PC-9 (cell line): ENCODE measurements at regions of chr16 and their contacts with region 1.

Region 1: DNA sequence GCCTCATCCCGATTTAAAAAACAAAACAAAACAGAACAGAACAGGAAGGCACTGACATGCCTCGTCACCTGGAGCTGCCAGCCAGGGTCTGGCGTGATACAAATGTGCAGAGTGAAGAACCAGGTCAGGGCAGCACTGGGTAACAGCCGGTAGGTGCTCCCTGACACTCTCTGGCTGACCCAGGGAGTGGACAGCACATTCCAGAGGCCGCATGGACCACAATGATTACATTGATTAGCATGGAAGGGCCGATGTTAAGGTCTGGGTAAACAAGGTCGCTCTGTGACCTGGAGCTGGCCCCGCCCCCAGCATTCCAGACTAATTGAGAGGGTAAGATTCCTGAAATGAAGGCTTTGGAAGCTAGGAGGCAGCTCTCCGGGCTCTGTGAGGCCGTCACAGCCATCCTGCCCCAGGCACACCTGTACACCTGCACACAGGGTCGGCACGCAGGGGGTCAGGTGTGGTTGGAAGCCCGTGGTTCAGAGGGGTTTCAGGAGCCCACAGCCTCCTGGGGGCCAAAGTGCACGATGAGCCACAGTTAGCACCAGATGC is 21.4 kb downstream of the PIEZO1 start:
- DNase-seq: peak; percentile 95 to 96
- H3K4me3 ChIP-seq: peak overlapping the region; percentile 49; the same call in 1 of the 2 replicates
- H3K27ac ChIP-seq: peak overlapping the region; percentile 63
- H3K4me1 ChIP-seq: peaks cover 98% of the 10 kb centered on the region
- H3K27me3 ChIP-seq: no peaks in the 10 kb centered on the region
- CTCF ChIP-seq: no peak; the same call in 1 of the 2 replicates

Region 2: DNA sequence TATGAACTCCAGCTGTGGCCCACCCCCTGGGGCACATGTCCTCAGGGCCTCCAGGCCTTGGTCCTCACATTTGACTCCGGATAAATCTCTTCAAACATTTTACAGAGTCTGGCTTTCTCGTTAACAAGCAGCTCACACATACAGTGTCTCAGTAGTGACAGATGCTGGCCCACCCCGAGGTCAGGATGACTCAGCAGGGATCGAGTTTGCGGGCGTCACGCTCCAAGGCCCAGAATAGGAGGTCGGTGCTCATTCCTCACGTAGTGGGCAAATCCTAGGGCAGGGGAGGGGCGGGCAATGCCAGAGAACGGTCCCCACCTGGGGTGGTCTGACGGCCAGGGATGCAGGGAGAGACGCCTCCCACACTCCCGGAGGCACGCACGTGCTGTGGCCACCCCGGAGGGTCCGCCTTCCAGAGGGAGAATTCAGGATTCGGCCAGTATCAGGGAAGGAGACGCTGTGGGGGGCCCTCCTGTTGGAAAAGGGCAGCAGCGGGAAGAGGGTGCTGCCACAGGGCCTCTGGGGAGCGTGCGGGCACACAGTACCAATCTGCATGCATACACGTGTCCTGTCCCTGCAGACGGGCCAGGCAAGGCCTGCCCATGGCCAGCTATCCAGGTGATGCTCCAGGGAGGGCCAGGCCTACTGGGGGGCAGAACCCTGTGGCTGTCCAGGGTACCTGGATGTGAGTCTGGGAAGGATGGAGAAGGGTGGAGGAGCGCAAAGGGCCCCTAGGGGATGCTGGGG is 902.9 kb before region 1 on chr16:
- CTCF ChIA-PET with region 1: no interaction called
- POLR2A ChIA-PET with region 1: no interaction called
- intact Hi-C with region 1: loop called (anchors 5 kb)
- DNase-seq: peak; percentile 52 to 80
- H3K4me3 ChIP-seq: no peak overlapping the region
- H3K27ac ChIP-seq: no peak overlapping the region
- H3K4me1 ChIP-seq: peaks cover 47% of the 10 kb centered on the region
- H3K27me3 ChIP-seq: no peaks in the 10 kb centered on the region
- CTCF ChIP-seq: no peak

Region 3: DNA sequence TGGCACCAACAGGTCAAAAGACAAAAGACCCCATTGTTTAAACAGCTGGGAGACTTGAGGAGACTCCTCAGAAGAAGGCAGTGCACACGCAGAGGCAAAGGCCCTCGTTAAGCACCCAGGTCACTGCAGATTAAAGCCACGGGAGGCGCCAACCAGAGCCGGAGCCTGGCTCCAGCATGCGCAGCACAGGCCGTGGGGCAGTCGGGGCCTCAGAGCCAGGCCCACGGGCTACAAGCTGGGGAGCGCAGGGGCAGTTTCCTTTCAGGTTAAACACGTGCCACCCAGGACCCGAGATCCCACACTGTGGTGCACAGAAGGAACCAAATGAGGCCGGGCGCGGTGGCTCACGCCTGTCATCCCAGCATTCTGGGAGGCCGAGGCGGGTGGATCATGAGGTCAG is 12.2 kb after region 1 on chr16:
- CTCF ChIA-PET with region 1: interaction called, 9 read pairs
- POLR2A ChIA-PET with region 1: interaction called, 37 read pairs
- intact Hi-C with region 1: loop called (anchors 1 kb)
- DNase-seq: no peak
- H3K4me3 ChIP-seq: no peak overlapping the region
- H3K27ac ChIP-seq: no peak overlapping the region
- H3K4me1 ChIP-seq: peaks cover 50% of the 10 kb centered on the region
- H3K27me3 ChIP-seq: no peaks in the 10 kb centered on the region
- CTCF ChIP-seq: no peak

Region 4: GRCh38 chr16:88785106-88785924 is 21.7 kb after region 1 on chr16 and contains the start of gene PIEZO1:
- CTCF ChIA-PET with region 1: interaction called, 9 read pairs
- POLR2A ChIA-PET with region 1: interaction called, 37 read pairs
- intact Hi-C with region 1: loop called (anchors 1 kb)
- DNase-seq: peak in 1 of 2 experiments; percentile 71
- H3K4me3 ChIP-seq: peak within 1 kb of the TSS; percentile 71
- H3K27ac ChIP-seq: peak within 1 kb of the TSS; percentile 74
- H3K4me1 ChIP-seq: peaks cover 31% of the 10 kb centered on the region
- H3K27me3 ChIP-seq: no peaks in the 10 kb centered on the region
- CTCF ChIP-seq: peak; percentile 87
- total RNA-seq, gene PIEZO1: 391 and 426 TPM in 2 replicates

Region 5: GRCh38 chr16:88803264-88803987 is 39.8 kb after region 1 on chr16 and contains the start of gene CDT1:
- CTCF ChIA-PET with region 1: no interaction called
- POLR2A ChIA-PET with region 1: interaction called, 3 read pairs
- intact Hi-C with region 1: loop called (anchors 2 kb)
- DNase-seq: peak in 1 of 2 experiments; percentile 89
- H3K4me3 ChIP-seq: peak within 1 kb of the TSS; percentile 82
- H3K27ac ChIP-seq: peak within 1 kb of the TSS; percentile 58
- H3K4me1 ChIP-seq: peaks cover 15% of the 10 kb centered on the region
- H3K27me3 ChIP-seq: no peaks in the 10 kb centered on the region
- CTCF ChIP-seq: no peak
- total RNA-seq, gene CDT1: 73.2 and 95.4 TPM in 2 replicates